HepG2 (cell line): ENCODE measurements at regions of chr3 and their contacts with region 1.

Region 1: DNA sequence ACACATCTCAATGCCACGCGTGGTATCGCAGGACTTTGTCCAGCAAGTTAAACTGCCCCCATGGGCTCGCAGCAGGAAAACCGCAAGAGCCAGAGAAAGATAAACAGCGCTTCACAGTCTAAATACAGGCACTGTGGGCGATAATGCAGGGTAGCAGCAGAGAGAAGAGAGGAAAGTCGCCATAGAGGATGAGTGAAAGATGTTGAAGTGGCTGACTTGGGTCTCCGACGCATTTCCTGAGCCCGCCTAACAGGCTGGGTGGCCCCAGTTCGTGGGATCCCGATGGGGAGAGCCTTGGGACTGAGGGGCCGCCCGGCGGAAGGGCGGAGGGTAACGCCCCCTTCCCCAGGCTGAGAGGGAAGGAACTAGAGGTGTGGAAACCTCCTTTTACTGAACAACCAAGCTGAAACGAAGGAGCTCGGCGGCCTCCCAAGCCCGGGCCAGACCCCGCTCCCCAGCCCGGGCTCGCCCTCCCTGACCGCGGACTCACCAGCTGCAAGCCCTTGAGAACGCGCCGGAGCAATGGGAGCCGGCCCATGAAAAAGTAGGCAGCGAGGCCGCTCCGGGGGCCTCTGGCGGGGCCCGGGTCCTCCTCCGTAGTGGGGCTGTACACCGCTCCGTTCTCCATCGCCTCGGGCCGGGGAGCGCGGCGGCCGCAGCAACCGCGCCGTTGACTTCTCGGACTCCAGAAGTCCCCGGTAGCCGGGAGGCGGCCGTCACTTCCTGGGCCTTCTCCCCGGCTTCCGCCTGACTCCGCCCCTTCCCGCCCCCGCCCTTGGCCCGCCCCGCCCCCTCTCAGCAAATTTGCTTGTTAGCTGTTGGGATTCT is at the start of gene CMTM6:
- DNase-seq: peak; percentile 61
- ATAC-seq: peak; percentile 92
- H3K4me3 ChIP-seq: peak within 1 kb of the TSS; percentile 76 to 97 (median 82)
- H3K27ac ChIP-seq: peak within 1 kb of the TSS; percentile 80
- H3K4me1 ChIP-seq: peaks cover 48% of the 10 kb centered on the region
- H3K27me3 ChIP-seq: peaks cover 0 to 1% of the 10 kb centered on the region in 2 experiments; a peak in 2 of 5 replicates
- CTCF ChIP-seq: no peak
- EP300 ChIP-seq: no peak
- POLR2A ChIP-seq: peak; percentile 46 to 72; a peak in 3 of 4 replicates
- RAD21 ChIP-seq: no peak
- total RNA-seq, gene CMTM6: 43.8 and 55.7 TPM in 2 replicates

Region 2: DNA sequence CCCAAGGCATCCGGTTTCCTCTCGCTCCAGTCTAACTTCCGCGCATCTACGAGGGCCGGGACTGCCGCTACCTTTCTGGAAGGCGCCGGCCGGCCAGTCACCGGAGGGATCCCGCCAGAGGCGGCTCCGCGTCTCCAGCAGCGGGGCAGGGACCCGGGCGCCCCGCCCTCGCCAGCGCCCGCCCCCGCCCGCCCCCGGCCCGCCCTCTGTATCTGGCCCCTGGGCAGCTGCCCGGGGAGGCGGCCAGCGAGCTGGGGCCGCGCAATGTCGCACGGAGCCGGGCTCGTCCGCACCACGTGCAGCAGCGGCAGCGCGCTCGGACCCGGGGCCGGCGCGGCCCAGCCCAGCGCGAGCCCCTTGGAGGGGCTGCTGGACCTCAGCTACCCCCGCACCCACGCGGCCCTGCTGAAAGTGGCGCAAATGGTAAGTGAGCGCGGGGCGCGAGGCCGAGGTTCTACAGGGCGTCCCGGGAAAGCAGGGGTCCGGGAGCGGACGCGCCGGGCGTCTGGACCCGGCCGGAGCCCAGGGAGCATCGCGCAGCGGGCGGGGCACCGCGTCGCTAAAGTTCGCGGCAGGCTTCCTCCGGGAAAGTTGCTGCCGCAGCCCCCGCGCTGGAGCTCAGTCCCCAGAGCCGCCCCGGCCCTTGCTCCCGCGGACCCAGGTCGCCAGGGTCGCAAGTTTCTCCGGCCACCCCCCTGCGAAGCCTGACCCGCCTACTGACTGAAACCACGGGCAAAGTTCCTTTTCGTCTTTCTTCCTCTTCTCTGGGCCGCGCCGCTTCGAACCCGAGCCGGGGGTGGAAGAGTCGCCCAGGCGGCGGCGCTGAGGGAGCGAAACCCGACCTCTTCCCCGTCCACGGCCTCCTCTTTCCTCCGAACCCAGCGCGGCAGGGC is 110.4 kb before region 1 on chr3 and contains the start of gene CMTM7:
- CTCF ChIA-PET with region 1: no interaction called
- POLR2A ChIA-PET with region 1: no interaction called
- in situ Hi-C with region 1: no loop called
- intact Hi-C with region 1: loop called (anchors 10 kb)
- DNase-seq: peak; percentile 39
- ATAC-seq: peak; percentile 91
- H3K4me3 ChIP-seq: peak within 1 kb of the TSS; percentile 55 to 90 (median 85)
- H3K27ac ChIP-seq: peak within 1 kb of the TSS; percentile 84
- H3K4me1 ChIP-seq: peaks cover 26% of the 10 kb centered on the region
- H3K27me3 ChIP-seq: no peaks in the 10 kb centered on the region; a peak in 1 of 5 replicates
- CTCF ChIP-seq: no peak; the same call in 1 of the 2 replicates
- EP300 ChIP-seq: no peak
- POLR2A ChIP-seq: peak; percentile 70 to 88
- RAD21 ChIP-seq: no peak
- total RNA-seq, gene CMTM7: 16.3 and 20.9 TPM in 2 replicates

Region 3: DNA sequence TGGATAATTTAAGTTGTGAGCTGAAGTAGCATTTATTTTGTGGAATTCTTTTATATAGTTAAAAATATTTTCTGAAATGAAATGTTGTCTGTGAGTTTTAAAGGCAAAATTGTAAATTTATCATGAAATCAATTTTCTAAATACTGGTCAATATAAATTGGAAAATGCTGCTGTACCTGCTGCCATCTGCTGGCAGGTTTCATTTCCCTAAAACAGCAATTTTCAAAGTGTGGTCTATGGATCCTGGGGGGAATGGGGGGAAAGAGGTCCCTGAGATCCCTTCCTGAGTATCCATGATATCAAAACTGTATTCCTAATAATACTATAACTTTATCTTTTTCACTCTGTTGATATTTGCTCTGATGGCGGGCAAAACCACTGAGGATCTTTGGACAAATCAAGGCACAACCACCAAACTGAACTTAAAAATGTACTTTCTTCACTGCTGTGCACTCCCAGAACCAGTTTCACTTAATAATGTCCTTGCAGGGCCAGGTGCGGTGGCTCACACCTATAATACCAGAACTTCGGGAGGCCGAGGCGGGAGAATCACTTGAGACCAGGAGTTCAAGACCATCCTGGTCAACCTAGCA is 431.9 kb after region 1 on chr3:
- CTCF ChIA-PET with region 1: no interaction called
- POLR2A ChIA-PET with region 1: no interaction called
- in situ Hi-C with region 1: loop called (anchors 10 kb)
- intact Hi-C with region 1: no loop called
- DNase-seq: no peak
- ATAC-seq: peak; percentile 55; the same call in 2 of the 3 replicates
- H3K4me3 ChIP-seq: no peak overlapping the region
- H3K27ac ChIP-seq: no peak overlapping the region
- H3K4me1 ChIP-seq: peaks cover 11% of the 10 kb centered on the region
- H3K27me3 ChIP-seq: no peaks in the 10 kb centered on the region; a peak in 1 of 5 replicates
- CTCF ChIP-seq: peak; percentile 72
- EP300 ChIP-seq: no peak
- POLR2A ChIP-seq: no peak
- RAD21 ChIP-seq: peak; percentile 34; the same call in 1 of the 2 replicates